ENCODE measurements at regions of chr22 and their contacts with region 1.

Region 1: DNA sequence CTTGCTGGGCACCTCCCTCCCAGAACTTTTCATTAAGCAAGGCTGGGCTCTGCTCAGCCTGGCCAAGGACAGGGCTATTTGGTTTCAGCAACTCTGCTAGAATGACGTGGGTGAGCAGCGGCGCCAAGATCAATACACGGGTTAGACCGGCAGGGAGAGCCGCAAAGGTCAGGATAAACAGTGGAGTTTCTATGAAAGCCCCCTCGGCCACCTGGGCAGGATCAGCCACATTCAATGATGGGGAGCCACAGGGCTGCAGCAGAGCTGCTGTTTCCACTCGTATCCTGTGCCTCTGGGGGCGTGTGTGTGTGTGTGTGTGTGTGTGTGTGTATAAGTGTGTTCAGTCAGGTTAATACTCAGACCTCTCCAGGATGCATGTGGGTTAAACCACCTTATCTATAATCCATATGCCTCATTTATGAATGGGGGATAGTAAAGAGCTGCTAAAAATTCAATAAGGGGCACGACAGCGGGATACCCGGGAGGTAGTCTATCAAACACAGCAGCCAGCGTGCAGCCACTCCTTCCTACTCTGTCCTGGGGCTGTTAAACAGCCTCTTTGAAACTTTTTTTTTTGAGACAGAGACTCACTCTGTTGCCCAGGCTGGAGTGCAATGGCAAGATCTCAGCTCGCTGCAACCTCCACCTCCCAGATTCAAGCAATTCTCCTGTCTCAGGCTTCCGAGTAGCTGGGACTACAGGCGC is 34.8 kb downstream of the MYH9 start:
- DNase-seq: no peak
- H3K4me3 Mint-ChIP-seq: no peak overlapping the region
- H3K27ac Mint-ChIP-seq: peak overlapping the region; percentile 86
- H3K4me1 Mint-ChIP-seq: peaks cover 85% of the 10 kb centered on the region
- H3K27me3 Mint-ChIP-seq: no peaks in the 10 kb centered on the region

Region 2: DNA sequence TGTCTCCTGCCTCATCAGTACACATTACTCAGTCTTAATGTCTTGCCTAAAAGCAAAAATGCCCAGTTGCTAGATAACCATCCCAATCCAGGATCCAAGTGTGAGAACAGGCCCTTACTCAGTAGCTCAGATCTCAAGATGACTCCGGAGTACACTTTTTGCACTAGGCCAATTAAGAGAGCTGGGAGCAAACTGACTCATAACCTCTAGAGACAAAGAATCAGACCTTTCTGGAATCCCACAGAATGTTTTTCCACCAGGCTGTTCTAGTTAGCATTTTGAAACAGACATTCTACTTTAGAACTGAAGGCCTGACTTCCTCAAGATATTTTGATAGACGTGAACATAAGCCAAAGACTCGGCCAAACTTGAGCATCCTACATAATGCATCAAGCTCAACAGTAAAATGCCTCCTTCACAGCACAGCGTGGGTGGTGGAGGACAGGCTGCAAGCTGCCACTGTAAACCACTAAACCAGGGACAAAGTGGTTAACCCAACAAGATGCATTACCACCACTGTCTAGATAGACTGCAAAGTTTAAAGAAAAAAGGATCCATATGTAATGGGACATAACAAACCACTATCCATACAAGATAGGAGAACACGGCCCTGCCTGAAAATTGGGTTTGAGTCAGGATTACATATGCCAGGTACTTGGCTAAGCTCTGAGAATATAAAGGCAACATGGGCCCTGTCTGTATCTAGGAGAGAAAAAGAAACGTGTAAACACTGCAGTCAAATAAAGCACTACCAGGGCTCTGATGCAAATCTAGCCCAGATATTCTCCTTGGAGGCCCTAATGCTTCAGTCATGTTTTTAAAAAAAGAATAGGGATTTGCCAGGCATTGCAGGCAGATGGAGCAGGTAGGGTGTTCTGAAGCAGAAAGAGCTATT is 13.5 kb before region 1 on chr22:
- intact Hi-C with region 1: loop called (anchors 1 kb)
- DNase-seq: peak; percentile 32
- H3K4me3 Mint-ChIP-seq: peak overlapping the region; percentile 58
- H3K27ac Mint-ChIP-seq: peak overlapping the region; percentile 92
- H3K4me1 Mint-ChIP-seq: peaks cover 90% of the 10 kb centered on the region
- H3K27me3 Mint-ChIP-seq: no peaks in the 10 kb centered on the region

Measured in activated T-helper 1 cell treated with anti-CD3 and anti-CD28 coated beads, Interleukin-12 subunit alpha, Interleukin-12 subunit beta, Interleukin-2, Interleukin-4 antibody, amounts not matched to agents 30 ng/mL and 10 ng/mL and 1 ng/mL, durations not matched to agents 14 hours and 24 hours and 36 hours (primary cell).